ENCODE measurements at regions of chr11 and their contacts with region 1.

Region 1: DNA sequence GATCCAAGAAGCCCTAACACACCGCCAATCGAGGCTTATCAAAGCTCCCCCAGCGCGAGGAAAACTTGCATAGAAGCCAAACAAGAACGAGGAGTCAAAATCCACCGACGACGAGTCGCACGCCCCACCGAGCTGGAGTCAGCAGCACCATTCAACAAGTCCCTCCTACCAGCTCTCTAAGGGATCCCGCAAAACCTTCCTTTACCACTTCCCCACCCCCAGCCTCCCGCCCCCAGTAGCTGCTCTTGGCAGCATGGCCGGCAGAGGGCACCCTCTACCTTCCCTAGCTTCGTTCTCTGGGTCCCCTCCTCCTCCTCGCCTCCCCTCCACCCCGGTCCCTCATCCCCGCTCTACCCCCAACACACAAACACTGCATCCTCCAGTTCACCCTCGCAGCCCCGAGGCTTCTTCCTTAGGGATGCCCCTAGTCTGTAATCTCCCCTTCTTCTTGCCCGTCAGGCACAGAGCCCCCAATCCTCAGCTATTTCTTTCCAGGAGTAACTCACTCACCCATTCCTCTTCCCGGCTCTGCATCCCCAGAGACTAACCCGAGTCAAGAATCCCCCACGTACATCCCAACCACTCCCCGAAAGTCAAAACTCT is 1.3 kb downstream of the BDNF start:
- DNase-seq: peak; percentile 91
- H3K4me3 ChIP-seq: peak overlapping the region; percentile 75 to 92 (median 88)
- H3K27ac ChIP-seq: peak overlapping the region; percentile 60
- H3K4me1 ChIP-seq: peaks cover 19% of the 10 kb centered on the region
- H3K27me3 ChIP-seq: peaks cover 0 to 10% of the 10 kb centered on the region in 2 experiments
- CTCF ChIP-seq: peak; percentile 44 to 92
- POLR2A ChIP-seq: peak; percentile 65

Region 2: GRCh38 chr11:27401833-27402316 is 297.1 kb before region 1 on chr11:
- CTCF ChIA-PET with region 1: no interaction called
- POLR2A ChIA-PET with region 1: no interaction called
- dilution Hi-C with region 1: no loop called
- intact Hi-C with region 1: no loop called
- DNase-seq: no peak
- H3K4me3 ChIP-seq: no peak overlapping the region
- H3K27ac ChIP-seq: no peak overlapping the region
- H3K4me1 ChIP-seq: no peaks in the 10 kb centered on the region
- H3K27me3 ChIP-seq: no peaks in the 10 kb centered on the region
- CTCF ChIP-seq: no peak
- POLR2A ChIP-seq: no peak

Region 3: GRCh38 chr11:28107748-28108618 is 409.0 kb after region 1 on chr11 and contains the starts of genes KIF18A and METTL15:
- CTCF ChIA-PET with region 1: interaction called, 8 read pairs
- POLR2A ChIA-PET with region 1: no interaction called
- dilution Hi-C with region 1: no loop called
- intact Hi-C with region 1: loop called (anchors 1 kb)
- DNase-seq: peak; percentile 100
- H3K4me3 ChIP-seq: peak within 1 kb of the TSS; percentile 74 to 99 (median 87)
- H3K27ac ChIP-seq: peak within 1 kb of the TSS; percentile 98
- H3K4me1 ChIP-seq: peaks cover 36% of the 10 kb centered on the region
- H3K27me3 ChIP-seq: no peaks in the 10 kb centered on the region
- CTCF ChIP-seq: no peak
- POLR2A ChIP-seq: peak; percentile 68
- total RNA-seq, gene KIF18A: 14.1 and 18.5 TPM in 2 replicates
- total RNA-seq, gene METTL15: 10.9 and 12.1 TPM in 2 replicates

Region 4: DNA sequence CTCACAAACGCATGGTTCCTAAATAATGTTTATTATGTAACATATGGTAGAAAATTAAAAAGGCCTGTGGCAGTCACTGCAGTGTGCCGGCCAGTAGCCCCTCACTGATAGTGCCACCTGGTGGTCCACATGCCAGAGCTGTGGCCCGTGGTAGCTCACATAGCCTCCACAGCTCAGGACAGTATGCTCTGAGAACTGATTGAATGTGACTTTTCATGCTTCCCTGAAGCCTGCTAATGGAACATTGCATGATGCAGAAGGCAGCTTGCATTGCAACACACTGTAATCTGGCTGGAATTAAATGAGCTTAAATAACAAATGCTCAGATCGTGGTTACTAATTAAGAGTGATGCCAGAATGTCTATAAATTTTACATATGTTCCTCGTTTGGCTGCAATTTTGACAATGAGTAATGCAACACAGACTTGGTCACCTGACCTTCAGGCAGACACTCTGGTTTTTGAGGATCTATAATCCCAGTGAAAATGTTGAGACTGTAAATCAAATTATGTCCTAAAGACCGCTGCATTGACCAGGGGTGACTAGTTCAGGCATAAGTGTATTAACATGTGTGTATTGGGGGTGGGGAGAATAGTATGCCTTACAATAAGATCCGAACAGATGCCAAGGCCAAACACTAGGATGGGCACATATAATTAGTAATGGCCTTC is 975.6 kb after region 1 on chr11:
- CTCF ChIA-PET with region 1: interaction called, 7 read pairs
- POLR2A ChIA-PET with region 1: no interaction called
- dilution Hi-C with region 1: no loop called
- intact Hi-C with region 1: loop called (anchors 1 kb)
- DNase-seq: peak; percentile 8
- H3K4me3 ChIP-seq: no peak overlapping the region
- H3K27ac ChIP-seq: no peak overlapping the region
- H3K4me1 ChIP-seq: no peaks in the 10 kb centered on the region
- H3K27me3 ChIP-seq: no peaks in the 10 kb centered on the region
- CTCF ChIP-seq: peak; percentile 22 to 37
- POLR2A ChIP-seq: no peak

Region 5: DNA sequence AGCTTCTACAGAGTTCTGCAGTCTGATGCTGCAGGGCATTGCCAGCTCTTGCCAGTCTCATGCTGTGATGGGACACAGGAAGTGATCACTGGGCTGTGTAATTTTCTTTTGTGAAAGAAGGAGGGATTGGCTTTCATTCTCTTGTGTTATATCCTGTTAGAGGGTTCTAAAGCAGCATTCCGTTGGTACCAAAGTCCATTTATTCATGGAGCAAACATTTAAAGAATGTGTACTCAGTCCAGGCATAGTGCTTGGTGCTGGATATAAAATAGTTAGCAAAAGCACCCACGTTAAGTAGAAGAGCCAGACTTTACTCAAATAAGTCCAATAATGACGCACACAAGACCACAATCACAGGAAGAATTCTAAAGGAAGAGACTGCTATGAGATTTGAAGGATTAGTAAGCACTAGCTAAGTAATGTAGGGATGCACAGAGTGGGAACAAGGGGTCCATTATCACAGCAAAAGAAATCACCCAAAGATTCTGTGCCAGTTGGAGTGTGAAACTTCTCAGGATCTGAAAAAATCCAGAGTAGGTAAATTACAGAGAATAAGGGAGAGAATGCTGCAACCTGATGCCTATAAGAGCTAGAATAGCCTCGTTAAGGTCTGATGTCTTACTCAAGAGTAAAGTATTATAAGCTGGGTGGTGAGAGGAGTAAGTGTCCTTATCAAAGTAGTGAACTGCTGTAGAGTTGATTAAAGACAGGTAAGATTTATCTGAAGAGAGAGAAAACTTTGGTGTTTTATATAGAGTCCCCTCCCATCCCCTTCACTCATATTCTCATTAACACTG is 1137.5 kb after region 1 on chr11:
- CTCF ChIA-PET with region 1: interaction called, 7 read pairs
- POLR2A ChIA-PET with region 1: interaction called, 4 read pairs
- dilution Hi-C with region 1: no loop called
- intact Hi-C with region 1: loop called (anchors 1 kb)
- DNase-seq: peak; percentile 81
- H3K4me3 ChIP-seq: no peak overlapping the region
- H3K27ac ChIP-seq: peak overlapping the region; percentile 96
- H3K4me1 ChIP-seq: peaks cover 70% of the 10 kb centered on the region
- H3K27me3 ChIP-seq: no peaks in the 10 kb centered on the region
- CTCF ChIP-seq: no peak
- POLR2A ChIP-seq: peak; percentile 82

Region 6: GRCh38 chr11:29119707-29120695 is 1421.0 kb after region 1 on chr11:
- CTCF ChIA-PET with region 1: interaction called, 10 read pairs
- POLR2A ChIA-PET with region 1: no interaction called
- dilution Hi-C with region 1: no loop called
- intact Hi-C with region 1: loop called (anchors 2 kb)
- DNase-seq: peak; percentile 99
- H3K4me3 ChIP-seq: peak overlapping the region in 2 of 3 experiments; percentile 25 to 62
- H3K27ac ChIP-seq: peak overlapping the region; percentile 100
- H3K4me1 ChIP-seq: peaks cover 33% of the 10 kb centered on the region
- H3K27me3 ChIP-seq: no peaks in the 10 kb centered on the region
- CTCF ChIP-seq: no peak
- POLR2A ChIP-seq: peak; percentile 74

Region 7: GRCh38 chr11:29321293-29322132 is 1622.5 kb after region 1 on chr11:
- CTCF ChIA-PET with region 1: interaction called, 10 read pairs
- POLR2A ChIA-PET with region 1: no interaction called
- dilution Hi-C with region 1: no loop called
- intact Hi-C with region 1: no loop called
- DNase-seq: no peak
- H3K4me3 ChIP-seq: no peak overlapping the region
- H3K27ac ChIP-seq: no peak overlapping the region
- H3K4me1 ChIP-seq: peaks cover 7% of the 10 kb centered on the region
- H3K27me3 ChIP-seq: no peaks in the 10 kb centered on the region
- CTCF ChIP-seq: no peak
- POLR2A ChIP-seq: no peak

Measured in endothelial cell of umbilical vein (primary cell).